BJ (cell line): ENCODE measurements at regions of chr10 and their contacts with region 1.

Region 1: GRCh38 chr10:99993701-99994689 is 15.8 kb downstream of the DNMBP start:
- DNase-seq: no peak
- H3K4me3 ChIP-seq: no peak overlapping the region
- H3K27me3 ChIP-seq: no peaks in the 10 kb centered on the region
- CTCF ChIP-seq: no peak

Region 2: DNA sequence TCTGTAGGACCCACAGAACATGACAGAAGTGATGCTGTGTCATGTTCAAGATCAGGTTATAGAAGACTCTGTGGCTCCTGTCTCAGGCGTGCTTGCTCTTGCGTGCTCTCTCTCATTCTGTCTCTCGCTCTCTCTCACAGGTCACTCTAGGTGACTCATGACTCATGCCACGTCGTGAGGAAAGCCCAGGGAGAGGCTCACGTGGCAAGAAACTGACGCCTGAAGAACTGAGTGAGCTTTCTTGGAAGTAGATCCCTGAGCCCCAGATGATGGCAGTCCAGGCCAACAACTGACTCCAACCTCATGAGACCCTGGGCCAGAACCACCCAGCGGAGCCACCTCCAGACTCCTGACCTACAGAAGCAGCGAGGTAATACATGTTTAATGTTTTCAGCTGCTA is 87.5 kb before region 1 on chr10:
- CTCF ChIA-PET with region 1: no interaction called
- POLR2A ChIA-PET with region 1: no interaction called
- DNase-seq: no peak
- H3K4me3 ChIP-seq: no peak overlapping the region
- H3K27me3 ChIP-seq: no peaks in the 10 kb centered on the region
- CTCF ChIP-seq: no peak

Region 3: DNA sequence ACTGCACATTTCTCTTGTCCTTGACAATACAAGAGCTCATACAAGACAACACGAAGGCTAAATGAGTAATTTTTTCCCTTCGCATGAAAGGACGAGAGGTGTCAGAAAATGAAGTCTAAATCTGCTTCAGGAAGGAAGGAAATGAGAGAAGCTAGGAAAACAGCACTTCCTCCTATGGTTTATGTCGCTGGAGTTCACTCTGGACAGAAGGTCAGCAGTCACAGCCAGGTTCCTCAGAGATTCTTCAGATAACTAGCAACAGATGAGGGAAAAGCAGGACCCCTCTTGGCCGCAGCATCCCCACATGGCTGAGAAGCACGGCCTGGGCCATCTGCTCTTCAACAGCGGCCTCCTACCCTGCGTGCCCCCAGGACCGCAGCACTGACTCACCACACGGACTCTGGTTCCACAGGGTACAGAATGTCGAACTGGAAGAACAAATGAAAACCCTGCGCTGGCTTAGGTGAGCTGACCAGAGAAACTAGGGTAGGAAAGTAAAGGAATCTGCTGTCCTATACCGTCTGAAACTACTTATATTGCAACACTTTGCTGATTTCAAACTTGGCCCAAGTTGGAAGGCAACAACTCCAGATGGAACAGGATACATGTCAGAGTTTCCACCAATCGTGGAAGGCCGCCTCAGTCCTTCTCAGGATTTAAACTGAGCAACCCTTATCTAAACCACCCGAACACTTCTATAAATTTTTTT is 10.6 kb before region 1 on chr10:
- CTCF ChIA-PET with region 1: interaction called, 5 read pairs
- POLR2A ChIA-PET with region 1: interaction called, 12 read pairs
- DNase-seq: no peak
- H3K4me3 ChIP-seq: peak overlapping the region; percentile 14
- H3K27me3 ChIP-seq: no peaks in the 10 kb centered on the region
- CTCF ChIP-seq: no peak